ENCODE measurements at regions of chr18 and their contacts with region 1.

Region 1: GRCh38 chr18:57881818-57882413 is 78.8 kb upstream of the ATP8B1 start:
- DNase-seq: peak; percentile 3 to 69 (median 45)
- ATAC-seq: peak; percentile 74
- H3K4me3 ChIP-seq: no peak overlapping the region
- H3K4me3 Mint-ChIP-seq: no peak overlapping the region
- H3K27ac ChIP-seq: no peak overlapping the region
- H3K27ac Mint-ChIP-seq: no peak overlapping the region
- H3K4me1 ChIP-seq: no peaks in the 10 kb centered on the region
- H3K4me1 Mint-ChIP-seq: no peaks in the 10 kb centered on the region
- H3K27me3 ChIP-seq: no peaks in the 10 kb centered on the region
- H3K27me3 Mint-ChIP-seq: peaks cover 6% of the 10 kb centered on the region
- CTCF ChIP-seq: peak; percentile 89

Region 2: DNA sequence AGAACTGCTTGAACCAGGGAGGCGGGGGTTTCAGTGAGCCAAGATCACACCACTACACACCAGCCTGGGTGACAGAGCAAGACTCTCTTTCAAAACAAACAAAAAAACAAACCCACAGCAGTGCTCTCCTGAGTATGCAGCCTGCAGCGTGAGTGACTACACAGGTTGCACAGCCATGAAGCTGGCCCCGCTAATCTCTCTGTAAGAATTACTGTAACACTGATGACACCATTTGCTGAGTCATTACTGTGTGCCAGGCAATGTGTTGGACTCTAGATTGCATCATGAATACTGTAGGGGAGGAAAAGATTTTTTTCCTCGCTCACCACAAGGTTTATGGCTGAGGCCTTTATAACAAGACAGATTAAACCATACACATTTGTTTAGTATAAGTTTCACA is 39.8 kb after region 1 on chr18:
- CTCF ChIA-PET with region 1: no interaction called
- POLR2A ChIA-PET with region 1: no interaction called
- intact Hi-C with region 1: loop called in 1 of 2 experiments (anchors 5 kb)
- DNase-seq: no peak
- ATAC-seq: no peak
- H3K4me3 ChIP-seq: no peak overlapping the region
- H3K4me3 Mint-ChIP-seq: no peak overlapping the region
- H3K27ac ChIP-seq: no peak overlapping the region
- H3K27ac Mint-ChIP-seq: no peak overlapping the region
- H3K4me1 ChIP-seq: no peaks in the 10 kb centered on the region
- H3K4me1 Mint-ChIP-seq: peaks cover under 1% of the 10 kb centered on the region
- H3K27me3 ChIP-seq: no peaks in the 10 kb centered on the region
- H3K27me3 Mint-ChIP-seq: peaks cover 2% of the 10 kb centered on the region
- CTCF ChIP-seq: no peak

Region 3: DNA sequence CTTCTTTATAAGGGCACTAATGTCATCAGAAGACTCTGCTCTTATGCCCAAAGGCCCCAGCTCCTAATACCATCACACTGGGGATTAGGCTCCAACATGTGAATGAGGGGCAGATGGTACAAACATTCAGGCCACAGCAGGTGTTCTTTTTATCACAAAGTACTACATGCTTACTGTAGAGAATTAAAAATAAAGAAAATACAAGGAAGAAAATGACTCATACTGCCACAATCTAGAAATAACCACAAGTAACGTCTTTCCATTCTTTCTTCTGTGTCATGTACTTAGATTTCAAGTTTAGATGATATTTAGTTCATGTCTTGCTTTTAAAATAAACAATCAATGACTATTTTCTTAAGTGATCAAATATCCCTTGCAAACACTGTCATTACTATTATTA is 61.8 kb after region 1 on chr18:
- CTCF ChIA-PET with region 1: no interaction called
- POLR2A ChIA-PET with region 1: no interaction called
- intact Hi-C with region 1: no loop called
- DNase-seq: no peak
- ATAC-seq: no peak
- H3K4me3 ChIP-seq: no peak overlapping the region
- H3K4me3 Mint-ChIP-seq: no peak overlapping the region
- H3K27ac ChIP-seq: no peak overlapping the region
- H3K27ac Mint-ChIP-seq: no peak overlapping the region
- H3K4me1 ChIP-seq: no peaks in the 10 kb centered on the region
- H3K4me1 Mint-ChIP-seq: no peaks in the 10 kb centered on the region
- H3K27me3 ChIP-seq: no peaks in the 10 kb centered on the region
- H3K27me3 Mint-ChIP-seq: peaks cover 11% of the 10 kb centered on the region
- CTCF ChIP-seq: no peak

Region 4: GRCh38 chr18:58117786-58118403 is 236.0 kb after region 1 on chr18:
- CTCF ChIA-PET with region 1: interaction called, 22 read pairs
- POLR2A ChIA-PET with region 1: no interaction called
- intact Hi-C with region 1: loop called in 1 of 2 experiments (anchors 1 kb)
- DNase-seq: no peak
- ATAC-seq: no peak
- H3K4me3 ChIP-seq: no peak overlapping the region
- H3K4me3 Mint-ChIP-seq: no peak overlapping the region
- H3K27ac ChIP-seq: no peak overlapping the region
- H3K27ac Mint-ChIP-seq: no peak overlapping the region
- H3K4me1 ChIP-seq: no peaks in the 10 kb centered on the region
- H3K4me1 Mint-ChIP-seq: peaks cover 4% of the 10 kb centered on the region
- H3K27me3 ChIP-seq: no peaks in the 10 kb centered on the region
- H3K27me3 Mint-ChIP-seq: no peaks in the 10 kb centered on the region
- CTCF ChIP-seq: no peak

Region 5: DNA sequence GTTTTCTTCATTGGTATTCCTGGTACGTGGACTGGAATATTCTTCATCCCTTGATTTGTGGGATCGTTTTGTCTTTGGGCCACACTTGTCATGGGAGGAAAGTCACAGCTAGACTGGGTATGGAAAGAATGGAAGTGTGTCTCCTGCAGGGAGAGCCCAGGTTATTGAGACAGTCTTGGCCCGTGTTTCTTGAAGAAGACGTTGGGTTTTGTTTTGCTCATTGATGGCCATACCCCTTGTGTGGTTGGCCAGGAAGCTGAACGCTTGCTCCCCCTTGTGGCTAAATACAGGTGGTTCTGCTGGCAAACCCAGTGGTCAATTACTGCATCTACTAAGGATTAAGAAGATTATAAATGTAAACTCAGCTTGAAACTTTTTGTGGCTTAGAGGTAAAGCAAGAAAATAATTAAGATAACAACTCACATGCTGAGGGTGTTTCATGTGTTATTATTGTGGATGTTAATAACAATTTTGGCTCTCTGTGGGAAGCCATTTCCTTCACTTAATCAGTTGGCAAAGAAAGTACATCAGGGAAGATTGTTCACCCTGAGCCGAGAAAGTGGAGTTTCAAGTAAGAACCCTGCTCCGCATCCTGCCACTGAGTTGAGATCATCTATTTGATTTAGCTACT is 253.9 kb after region 1 on chr18:
- CTCF ChIA-PET with region 1: interaction called, 15 read pairs
- POLR2A ChIA-PET with region 1: no interaction called
- intact Hi-C with region 1: loop called in 1 of 2 experiments (anchors 5 kb)
- DNase-seq: peak in 8 of 9 experiments; percentile 11 to 68 (median 42)
- ATAC-seq: peak; percentile 71
- H3K4me3 ChIP-seq: no peak overlapping the region
- H3K4me3 Mint-ChIP-seq: no peak overlapping the region
- H3K27ac ChIP-seq: no peak overlapping the region
- H3K27ac Mint-ChIP-seq: no peak overlapping the region
- H3K4me1 ChIP-seq: peaks cover 6% of the 10 kb centered on the region
- H3K4me1 Mint-ChIP-seq: peaks cover 15% of the 10 kb centered on the region
- H3K27me3 ChIP-seq: no peaks in the 10 kb centered on the region
- H3K27me3 Mint-ChIP-seq: peaks cover 2% of the 10 kb centered on the region
- CTCF ChIP-seq: peak; percentile 66

Region 6: GRCh38 chr18:58180738-58181353 is 298.9 kb after region 1 on chr18:
- CTCF ChIA-PET with region 1: interaction called, 5 read pairs
- POLR2A ChIA-PET with region 1: no interaction called
- intact Hi-C with region 1: loop called in 1 of 2 experiments (anchors 2 kb)
- DNase-seq: peak; percentile 25 to 75 (median 62)
- ATAC-seq: peak; percentile 52
- H3K4me3 ChIP-seq: no peak overlapping the region
- H3K4me3 Mint-ChIP-seq: no peak overlapping the region
- H3K27ac ChIP-seq: no peak overlapping the region
- H3K27ac Mint-ChIP-seq: no peak overlapping the region
- H3K4me1 ChIP-seq: no peaks in the 10 kb centered on the region
- H3K4me1 Mint-ChIP-seq: no peaks in the 10 kb centered on the region
- H3K27me3 ChIP-seq: no peaks in the 10 kb centered on the region
- H3K27me3 Mint-ChIP-seq: peaks cover 2% of the 10 kb centered on the region
- CTCF ChIP-seq: peak; percentile 97

Region 7: DNA sequence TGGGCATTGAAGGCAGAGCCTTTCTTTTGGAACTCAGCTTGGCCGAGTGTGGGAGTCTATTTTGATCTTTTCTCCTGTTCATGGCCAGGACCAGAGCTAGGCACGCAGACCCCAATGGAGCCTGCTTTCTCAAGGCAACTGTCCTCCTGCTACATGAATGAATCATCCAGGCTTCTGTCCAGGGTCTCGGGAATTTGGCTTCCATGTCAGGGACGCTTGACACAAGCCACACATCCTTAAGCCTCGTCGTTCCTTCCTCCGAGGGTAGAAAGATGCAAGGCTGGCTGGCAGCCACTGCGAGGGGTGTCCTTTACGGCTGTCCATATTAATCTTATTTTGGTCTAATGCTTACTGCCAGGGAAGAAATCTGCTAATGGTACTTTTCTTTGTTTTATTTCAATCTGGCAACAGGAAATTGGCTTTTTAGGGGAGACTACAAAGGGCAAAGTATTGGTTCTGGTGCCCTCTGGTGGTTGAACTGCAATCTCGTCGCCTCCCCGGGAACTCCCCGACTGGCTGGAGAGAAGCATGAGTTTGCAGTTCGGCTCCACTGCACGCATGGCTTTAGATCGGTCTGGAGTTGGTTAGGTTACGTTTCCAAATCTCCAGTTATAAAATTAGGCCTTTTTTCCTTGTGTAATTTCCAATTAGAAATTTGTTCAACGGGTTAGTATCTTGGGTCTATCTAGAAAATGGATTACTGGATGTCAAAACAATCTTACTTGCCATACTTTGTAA is 611.8 kb after region 1 on chr18:
- CTCF ChIA-PET with region 1: no interaction called
- POLR2A ChIA-PET with region 1: no interaction called
- intact Hi-C with region 1: loop called in 1 of 2 experiments (anchors 10 kb)
- DNase-seq: peak; percentile 26 to 78 (median 66)
- ATAC-seq: peak; percentile 85
- H3K4me3 ChIP-seq: no peak overlapping the region
- H3K4me3 Mint-ChIP-seq: no peak overlapping the region
- H3K27ac ChIP-seq: no peak overlapping the region
- H3K27ac Mint-ChIP-seq: no peak overlapping the region
- H3K4me1 ChIP-seq: no peaks in the 10 kb centered on the region
- H3K4me1 Mint-ChIP-seq: peaks cover 8% of the 10 kb centered on the region
- H3K27me3 ChIP-seq: no peaks in the 10 kb centered on the region
- H3K27me3 Mint-ChIP-seq: peaks cover 32% of the 10 kb centered on the region
- CTCF ChIP-seq: peak; percentile 71

Measured in CD8-positive, alpha-beta T cell (primary cell).